ENCODE measurements at regions of chr6 and their contacts with region 1.

Region 1: GRCh38 chr6:106339334-106340029 is 13.9 kb upstream of the ATG5 start:
- DNase-seq: peak; percentile 71
- ATAC-seq: peak; percentile 95
- H3K4me3 Mint-ChIP-seq: no peak overlapping the region
- H3K27ac Mint-ChIP-seq: no peak overlapping the region
- H3K4me1 Mint-ChIP-seq: no peaks in the 10 kb centered on the region
- H3K27me3 Mint-ChIP-seq: peaks cover 24% of the 10 kb centered on the region
- CTCF ChIP-seq: peak; percentile 77

Region 2: GRCh38 chr6:106194949-106195921 is 144.2 kb before region 1 on chr6:
- CTCF ChIA-PET with region 1: no interaction called
- POLR2A ChIA-PET with region 1: no interaction called
- intact Hi-C with region 1: no loop called
- DNase-seq: no peak
- ATAC-seq: peak; percentile 84
- H3K4me3 Mint-ChIP-seq: peak overlapping the region; percentile 26
- H3K27ac Mint-ChIP-seq: peak overlapping the region; percentile 89
- H3K4me1 Mint-ChIP-seq: peaks cover 44% of the 10 kb centered on the region
- H3K27me3 Mint-ChIP-seq: no peaks in the 10 kb centered on the region
- CTCF ChIP-seq: no peak

Region 3: GRCh38 chr6:106325336-106326178 is 13.9 kb before region 1 on chr6 and contains the start of gene ATG5:
- CTCF ChIA-PET with region 1: interaction called, 23 read pairs
- POLR2A ChIA-PET with region 1: interaction called, 3 read pairs
- intact Hi-C with region 1: no loop called
- DNase-seq: peak; percentile 100
- ATAC-seq: peak; percentile 95
- H3K4me3 Mint-ChIP-seq: peak within 1 kb of the TSS; percentile 98
- H3K27ac Mint-ChIP-seq: peak within 1 kb of the TSS; percentile 99
- H3K4me1 Mint-ChIP-seq: peaks cover 35% of the 10 kb centered on the region
- H3K27me3 Mint-ChIP-seq: peaks cover 4% of the 10 kb centered on the region
- CTCF ChIP-seq: no peak
- total RNA-seq, gene ATG5: 31.2 to 32.4 TPM

Region 4: DNA sequence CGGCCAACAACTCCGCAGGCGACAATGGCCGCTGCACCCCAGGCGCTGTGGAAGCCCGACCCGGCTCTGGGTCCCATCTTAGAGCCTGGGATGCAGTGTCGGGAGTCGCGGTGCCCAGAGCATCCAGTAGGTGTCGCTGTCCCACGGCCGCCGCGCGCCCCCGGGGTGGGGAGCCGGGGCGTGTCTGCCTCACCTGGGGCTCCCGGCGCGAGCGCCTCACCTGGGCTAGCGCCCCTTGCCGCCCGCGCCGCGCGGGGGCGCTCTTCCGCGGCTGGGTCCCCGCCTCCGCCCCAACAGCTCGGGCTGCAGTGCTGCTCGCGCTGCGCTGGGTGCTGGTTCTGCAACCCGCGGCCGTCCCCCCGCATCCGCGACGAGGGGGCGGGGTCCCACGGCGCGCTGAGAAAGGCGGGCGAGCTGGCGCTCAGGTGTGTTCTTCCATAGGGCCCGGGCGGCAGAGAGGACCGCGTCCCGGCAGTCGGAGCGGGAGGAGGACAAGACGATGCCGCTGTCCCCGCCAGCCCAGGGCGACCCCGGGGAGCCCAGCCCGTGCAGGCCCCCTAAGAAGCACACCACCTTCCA is 21.0 kb after region 1 on chr6 and contains the start of gene CRYBG1:
- CTCF ChIA-PET with region 1: interaction called, 12 read pairs
- POLR2A ChIA-PET with region 1: no interaction called
- intact Hi-C with region 1: no loop called
- DNase-seq: peak; percentile 73
- ATAC-seq: peak; percentile 92
- H3K4me3 Mint-ChIP-seq: peak within 1 kb of the TSS; percentile 68
- H3K27ac Mint-ChIP-seq: no peak within 1 kb of the TSS
- H3K4me1 Mint-ChIP-seq: peaks cover 10% of the 10 kb centered on the region
- H3K27me3 Mint-ChIP-seq: peaks cover 46% of the 10 kb centered on the region
- CTCF ChIP-seq: peak; percentile 99
- total RNA-seq, gene CRYBG1: 20.8 to 21.1 TPM

Region 5: DNA sequence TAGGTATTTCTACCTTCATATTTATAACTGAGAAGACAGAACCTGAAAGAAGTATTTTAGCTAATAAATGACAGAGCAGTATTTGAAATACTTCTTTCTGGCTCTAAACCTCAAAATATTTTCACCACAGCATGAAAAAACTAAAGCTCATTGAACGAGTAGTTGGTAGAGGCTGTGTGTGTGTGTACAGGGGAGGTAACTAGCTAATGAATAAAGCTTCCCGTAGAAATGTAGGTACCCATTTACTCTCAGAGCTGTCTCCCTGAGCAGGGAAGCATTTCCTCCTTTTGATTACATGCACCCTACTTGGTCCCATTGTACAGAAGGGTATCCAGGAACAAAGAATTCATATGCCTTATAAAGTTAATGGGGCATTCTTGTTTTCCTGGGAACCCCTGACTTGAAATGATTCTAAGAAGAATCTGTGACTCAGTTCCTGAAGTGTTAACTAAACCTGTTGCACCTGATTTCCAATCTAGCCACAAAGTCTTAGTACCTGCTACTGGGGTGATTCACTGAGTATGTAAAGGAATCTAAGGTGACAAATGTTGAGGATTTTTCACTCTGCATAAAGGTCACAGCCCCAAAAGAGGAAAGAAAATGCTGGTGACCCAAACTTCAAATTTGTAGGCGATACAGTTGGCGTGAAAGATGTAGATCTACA is 33.5 kb after region 1 on chr6:
- CTCF ChIA-PET with region 1: interaction called, 11 read pairs
- POLR2A ChIA-PET with region 1: no interaction called
- intact Hi-C with region 1: no loop called
- DNase-seq: no peak
- ATAC-seq: peak; percentile 86
- H3K4me3 Mint-ChIP-seq: no peak overlapping the region
- H3K27ac Mint-ChIP-seq: peak overlapping the region; percentile 78
- H3K4me1 Mint-ChIP-seq: peaks cover 17% of the 10 kb centered on the region
- H3K27me3 Mint-ChIP-seq: peaks cover 13% of the 10 kb centered on the region
- CTCF ChIP-seq: no peak

Region 6: GRCh38 chr6:106439446-106439845 is 100.0 kb after region 1 on chr6:
- CTCF ChIA-PET with region 1: interaction called, 57 read pairs
- POLR2A ChIA-PET with region 1: no interaction called
- intact Hi-C with region 1: loop called (anchors 2 kb)
- DNase-seq: no peak
- ATAC-seq: no peak
- H3K4me3 Mint-ChIP-seq: no peak overlapping the region
- H3K27ac Mint-ChIP-seq: no peak overlapping the region
- H3K4me1 Mint-ChIP-seq: no peaks in the 10 kb centered on the region
- H3K27me3 Mint-ChIP-seq: peaks cover 20% of the 10 kb centered on the region
- CTCF ChIP-seq: no peak

Region 7: DNA sequence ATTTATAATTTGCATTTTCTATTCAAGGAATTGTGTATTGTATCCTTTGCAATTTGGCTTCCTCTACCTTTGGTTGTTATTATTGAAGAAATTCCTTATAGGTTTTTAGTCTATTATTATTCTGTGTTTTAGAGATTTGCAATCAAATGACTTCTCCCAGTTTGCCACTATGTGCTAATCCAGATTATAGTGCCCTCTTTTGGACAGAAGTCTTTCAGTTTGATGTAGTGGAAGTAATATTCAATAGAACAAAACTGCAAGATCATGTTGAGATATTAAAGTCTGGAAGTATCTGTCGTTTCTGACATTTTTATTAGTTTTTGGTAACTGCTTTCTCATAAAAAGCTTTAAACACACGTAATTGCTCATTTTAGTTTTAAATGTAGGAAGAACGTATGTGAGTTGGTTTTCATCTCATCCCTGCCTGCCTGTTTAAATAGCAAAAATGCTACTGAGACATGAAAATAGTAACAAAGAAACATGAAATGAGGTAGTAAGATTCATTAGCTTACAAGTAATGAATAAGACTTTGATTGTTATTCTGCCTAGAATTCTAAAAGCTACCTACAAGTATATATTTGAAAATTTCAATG is 217.0 kb after region 1 on chr6:
- CTCF ChIA-PET with region 1: interaction called, 10 read pairs
- POLR2A ChIA-PET with region 1: no interaction called
- intact Hi-C with region 1: no loop called
- DNase-seq: no peak
- ATAC-seq: no peak
- H3K4me3 Mint-ChIP-seq: no peak overlapping the region
- H3K27ac Mint-ChIP-seq: no peak overlapping the region
- H3K4me1 Mint-ChIP-seq: peaks cover 26% of the 10 kb centered on the region
- H3K27me3 Mint-ChIP-seq: no peaks in the 10 kb centered on the region
- CTCF ChIP-seq: peak; percentile 60

Region 8: GRCh38 chr6:106702451-106703110 is 363.1 kb after region 1 on chr6:
- CTCF ChIA-PET with region 1: no interaction called
- POLR2A ChIA-PET with region 1: no interaction called
- intact Hi-C with region 1: no loop called
- DNase-seq: peak; percentile 3
- ATAC-seq: no peak
- H3K4me3 Mint-ChIP-seq: no peak overlapping the region
- H3K27ac Mint-ChIP-seq: no peak overlapping the region
- H3K4me1 Mint-ChIP-seq: peaks cover 2% of the 10 kb centered on the region
- H3K27me3 Mint-ChIP-seq: peaks cover 10% of the 10 kb centered on the region
- CTCF ChIP-seq: no peak

Region 9: GRCh38 chr6:106979427-106979884 is 640.0 kb after region 1 on chr6:
- CTCF ChIA-PET with region 1: interaction called, 14 read pairs
- POLR2A ChIA-PET with region 1: no interaction called
- intact Hi-C with region 1: loop called (anchors 10 kb)
- DNase-seq: peak; percentile 89
- ATAC-seq: peak; percentile 71
- H3K4me3 Mint-ChIP-seq: no peak overlapping the region
- H3K27ac Mint-ChIP-seq: no peak overlapping the region
- H3K4me1 Mint-ChIP-seq: no peaks in the 10 kb centered on the region
- H3K27me3 Mint-ChIP-seq: peaks cover 29% of the 10 kb centered on the region
- CTCF ChIP-seq: peak; percentile 96

Measured in activated CD8-positive, alpha-beta T cell treated with anti-CD3 and anti-CD28 coated beads for 36 hours (primary cell).